ENCODE measurements at regions of chr3 and their contacts with region 1.

Region 1: GRCh38 chr3:138174421-138175122 is at the start of gene DBR1:
- DNase-seq: peak; percentile 85
- ATAC-seq: peak; percentile 92
- H3K4me3 Mint-ChIP-seq: peak within 1 kb of the TSS; percentile 97
- H3K27ac Mint-ChIP-seq: peak within 1 kb of the TSS; percentile 98
- H3K4me1 Mint-ChIP-seq: peaks cover 32% of the 10 kb centered on the region
- H3K27me3 Mint-ChIP-seq: no peaks in the 10 kb centered on the region
- total RNA-seq, gene DBR1: 18.1 to 21.8 TPM

Region 2: DNA sequence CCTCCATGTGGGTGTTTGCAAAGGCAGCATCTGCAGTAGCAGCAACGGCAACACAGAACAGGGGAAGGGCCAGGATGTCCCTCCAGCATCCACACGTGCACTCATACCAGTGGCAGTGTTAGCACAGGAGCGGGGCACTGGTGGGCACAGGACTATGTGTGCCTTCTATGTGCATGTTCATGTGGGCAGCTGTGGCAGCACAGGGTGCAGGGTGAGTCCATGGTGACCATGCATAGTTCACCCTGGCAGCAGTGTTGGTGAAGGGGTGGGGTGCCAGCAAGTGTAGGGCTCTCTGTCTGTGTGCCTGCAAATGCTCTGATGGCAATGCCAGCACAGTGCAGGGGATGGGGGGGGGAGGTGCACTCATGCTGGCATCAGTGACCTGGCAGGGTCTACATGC is 632.5 kb before region 1 on chr3:
- CTCF ChIA-PET with region 1: no interaction called
- POLR2A ChIA-PET with region 1: no interaction called
- DNase-seq: no peak
- ATAC-seq: no peak
- H3K4me3 Mint-ChIP-seq: no peak overlapping the region
- H3K27ac Mint-ChIP-seq: no peak overlapping the region
- H3K4me1 Mint-ChIP-seq: no peaks in the 10 kb centered on the region
- H3K27me3 Mint-ChIP-seq: no peaks in the 10 kb centered on the region

Region 3: DNA sequence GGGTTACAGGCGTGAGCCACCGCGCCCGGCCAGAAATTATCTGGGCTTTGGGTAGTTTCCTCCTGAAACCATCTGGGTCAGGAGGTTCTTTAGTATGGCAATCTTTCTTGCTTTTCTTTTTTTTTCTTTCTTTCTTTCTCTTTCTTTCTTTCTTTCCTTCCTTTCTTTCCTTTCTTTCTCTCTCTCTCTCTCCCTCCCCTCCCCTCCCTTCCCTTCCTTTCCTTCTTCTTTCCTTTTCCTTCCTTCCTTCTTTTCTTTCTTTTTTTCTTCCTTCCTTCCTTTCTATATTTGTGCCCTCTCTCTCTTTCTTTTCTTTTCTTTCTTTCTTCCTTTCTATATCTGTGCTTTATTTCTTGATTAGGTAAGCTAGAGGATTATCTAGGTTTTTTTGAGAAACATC is 16.8 kb before region 1 on chr3:
- CTCF ChIA-PET with region 1: no interaction called
- POLR2A ChIA-PET with region 1: no interaction called
- DNase-seq: no peak
- ATAC-seq: no peak
- H3K4me3 Mint-ChIP-seq: no peak overlapping the region
- H3K27ac Mint-ChIP-seq: no peak overlapping the region
- H3K4me1 Mint-ChIP-seq: no peaks in the 10 kb centered on the region
- H3K27me3 Mint-ChIP-seq: no peaks in the 10 kb centered on the region

Region 4: DNA sequence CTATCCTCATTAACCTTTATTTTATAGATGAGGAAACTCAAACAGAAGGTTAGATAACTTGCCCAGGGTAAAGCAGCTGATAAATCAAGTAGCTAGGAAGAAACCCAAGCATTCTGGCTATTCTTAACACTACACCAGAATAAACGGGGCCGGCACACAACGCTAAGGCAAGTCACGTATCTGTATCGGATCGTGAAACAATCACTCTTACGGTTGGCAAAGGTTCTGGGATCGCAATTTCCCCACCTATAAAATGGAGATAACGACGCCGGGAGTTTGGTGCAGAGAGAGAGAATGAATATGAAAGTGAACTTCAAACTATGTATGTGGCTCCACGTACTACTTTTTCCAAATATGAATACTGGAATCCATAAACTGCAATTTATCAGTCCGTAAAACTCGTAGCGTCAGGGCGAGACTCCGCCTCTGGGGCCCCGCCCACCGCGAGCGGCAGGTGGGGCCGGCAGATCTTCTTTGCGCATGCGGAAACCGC is 12.3 kb after region 1 on chr3:
- CTCF ChIA-PET with region 1: interaction called, 15 read pairs
- POLR2A ChIA-PET with region 1: interaction called, 30 read pairs
- DNase-seq: peak; percentile 92
- ATAC-seq: peak; percentile 92
- H3K4me3 Mint-ChIP-seq: peak overlapping the region; percentile 94
- H3K27ac Mint-ChIP-seq: peak overlapping the region; percentile 96
- H3K4me1 Mint-ChIP-seq: peaks cover 34% of the 10 kb centered on the region
- H3K27me3 Mint-ChIP-seq: peaks cover 3% of the 10 kb centered on the region

Region 5: DNA sequence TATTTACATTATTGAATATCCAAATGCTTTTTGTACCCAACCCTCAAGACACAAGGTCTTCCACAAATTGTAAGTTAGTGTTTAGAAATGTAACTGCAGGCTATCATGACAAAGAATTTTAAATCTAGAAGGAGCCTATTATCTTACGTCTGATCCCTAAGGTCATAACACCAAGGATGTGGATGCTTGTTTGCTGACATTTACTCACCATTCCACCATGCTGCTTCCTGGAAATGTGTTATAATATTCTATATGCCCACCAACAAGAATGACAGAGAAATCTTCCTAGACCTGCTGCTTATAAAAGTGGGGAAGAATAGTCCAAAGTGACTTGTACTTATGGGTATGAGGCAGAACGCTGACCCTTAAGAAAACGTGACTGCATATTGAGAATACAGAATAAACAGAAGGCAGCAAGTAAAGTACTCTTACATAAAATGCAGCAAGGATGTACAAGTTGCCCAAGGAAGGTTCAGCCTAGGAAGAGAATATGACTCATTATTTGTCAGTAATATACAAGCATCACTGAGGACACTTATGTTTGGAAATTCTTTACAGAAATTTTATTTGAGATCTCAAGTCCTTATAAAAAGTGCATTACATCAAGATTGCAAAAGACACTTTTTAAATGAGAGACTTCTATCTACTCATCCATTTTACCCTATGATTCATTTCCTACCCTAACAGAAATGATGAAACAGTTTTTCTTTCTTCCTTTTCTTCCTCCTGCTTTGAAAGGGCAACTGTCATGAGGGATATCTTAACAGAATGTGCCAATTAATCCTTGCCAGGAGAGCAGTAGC is 319.4 kb after region 1 on chr3:
- CTCF ChIA-PET with region 1: no interaction called
- POLR2A ChIA-PET with region 1: no interaction called
- DNase-seq: no peak
- ATAC-seq: no peak
- H3K4me3 Mint-ChIP-seq: no peak overlapping the region
- H3K27ac Mint-ChIP-seq: no peak overlapping the region
- H3K4me1 Mint-ChIP-seq: no peaks in the 10 kb centered on the region
- H3K27me3 Mint-ChIP-seq: no peaks in the 10 kb centered on the region